Gastrocnemius medialis (tissue), 4 donors: ENCODE measurements at regions of chr12 and their contacts with region 1.

Region 1: GRCh38 chr12:91163116-91163515 is 19.5 kb downstream of the DCN start:
- DNase-seq: no peak
- ATAC-seq: no peak
- H3K4me3 ChIP-seq: no peak overlapping the region
- H3K27ac ChIP-seq: no peak overlapping the region
- H3K4me1 ChIP-seq: no peaks in the 10 kb centered on the region
- H3K27me3 ChIP-seq: no peaks in the 10 kb centered on the region
- CTCF ChIP-seq: no peak
- POLR2A ChIP-seq: no peak

Region 2: DNA sequence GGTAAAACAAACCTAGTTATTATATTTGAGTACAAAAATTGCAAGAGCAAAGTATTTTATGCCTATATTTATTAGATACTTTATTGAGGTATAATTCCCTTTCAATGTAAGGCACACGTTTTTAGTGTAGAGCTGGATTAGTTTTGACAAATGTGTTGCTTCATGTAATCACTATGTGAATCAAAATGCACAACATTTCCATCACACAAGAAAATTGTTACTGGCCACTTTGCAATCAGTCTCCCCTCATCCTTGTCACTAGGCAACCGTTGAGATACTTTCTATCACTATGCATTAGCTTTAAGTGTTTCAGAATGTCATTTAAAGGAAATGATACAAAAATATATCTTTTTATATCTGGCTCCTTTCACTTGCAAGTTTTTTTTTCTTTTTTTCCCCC is 739.2 kb before region 1 on chr12:
- in situ Hi-C with region 1: no loop called
- intact Hi-C with region 1: no loop called
- DNase-seq: no peak
- ATAC-seq: no peak
- H3K4me3 ChIP-seq: no peak overlapping the region
- H3K27ac ChIP-seq: no peak overlapping the region
- H3K4me1 ChIP-seq: no peaks in the 10 kb centered on the region
- H3K27me3 ChIP-seq: no peaks in the 10 kb centered on the region
- CTCF ChIP-seq: no peak
- POLR2A ChIP-seq: no peak

Region 3: DNA sequence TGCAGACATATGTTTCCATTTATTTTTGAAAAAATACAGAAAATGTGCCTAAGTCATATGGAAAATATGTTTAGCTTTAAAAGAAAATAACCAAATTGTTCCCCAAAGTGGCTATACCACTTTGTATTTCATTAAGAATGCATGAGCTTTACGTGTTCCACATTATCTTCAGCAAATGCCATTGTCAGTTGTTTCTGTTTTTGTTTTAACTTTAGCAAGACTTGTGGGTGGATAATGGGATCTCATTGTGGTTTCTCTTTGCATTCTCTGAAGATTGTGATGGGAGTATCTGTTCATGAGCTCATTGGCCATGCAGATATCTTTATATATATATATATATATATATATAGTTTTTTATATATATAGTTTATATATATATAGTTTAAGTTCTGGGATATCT is 389.6 kb before region 1 on chr12:
- in situ Hi-C with region 1: no loop called
- intact Hi-C with region 1: no loop called
- DNase-seq: no peak
- ATAC-seq: no peak
- H3K4me3 ChIP-seq: no peak overlapping the region
- H3K27ac ChIP-seq: no peak overlapping the region
- H3K4me1 ChIP-seq: no peaks in the 10 kb centered on the region
- H3K27me3 ChIP-seq: no peaks in the 10 kb centered on the region
- CTCF ChIP-seq: no peak
- POLR2A ChIP-seq: no peak

Region 4: GRCh38 chr12:91017511-91018263 is 145.4 kb before region 1 on chr12:
- in situ Hi-C with region 1: no loop called
- intact Hi-C with region 1: no loop called
- DNase-seq: no peak
- ATAC-seq: no peak
- H3K4me3 ChIP-seq: no peak overlapping the region
- H3K27ac ChIP-seq: peak overlapping the region; percentile 27 to 70 (median 54)
- H3K4me1 ChIP-seq: no peaks in the 10 kb centered on the region
- H3K27me3 ChIP-seq: no peaks in the 10 kb centered on the region
- CTCF ChIP-seq: no peak
- POLR2A ChIP-seq: no peak

Region 5: DNA sequence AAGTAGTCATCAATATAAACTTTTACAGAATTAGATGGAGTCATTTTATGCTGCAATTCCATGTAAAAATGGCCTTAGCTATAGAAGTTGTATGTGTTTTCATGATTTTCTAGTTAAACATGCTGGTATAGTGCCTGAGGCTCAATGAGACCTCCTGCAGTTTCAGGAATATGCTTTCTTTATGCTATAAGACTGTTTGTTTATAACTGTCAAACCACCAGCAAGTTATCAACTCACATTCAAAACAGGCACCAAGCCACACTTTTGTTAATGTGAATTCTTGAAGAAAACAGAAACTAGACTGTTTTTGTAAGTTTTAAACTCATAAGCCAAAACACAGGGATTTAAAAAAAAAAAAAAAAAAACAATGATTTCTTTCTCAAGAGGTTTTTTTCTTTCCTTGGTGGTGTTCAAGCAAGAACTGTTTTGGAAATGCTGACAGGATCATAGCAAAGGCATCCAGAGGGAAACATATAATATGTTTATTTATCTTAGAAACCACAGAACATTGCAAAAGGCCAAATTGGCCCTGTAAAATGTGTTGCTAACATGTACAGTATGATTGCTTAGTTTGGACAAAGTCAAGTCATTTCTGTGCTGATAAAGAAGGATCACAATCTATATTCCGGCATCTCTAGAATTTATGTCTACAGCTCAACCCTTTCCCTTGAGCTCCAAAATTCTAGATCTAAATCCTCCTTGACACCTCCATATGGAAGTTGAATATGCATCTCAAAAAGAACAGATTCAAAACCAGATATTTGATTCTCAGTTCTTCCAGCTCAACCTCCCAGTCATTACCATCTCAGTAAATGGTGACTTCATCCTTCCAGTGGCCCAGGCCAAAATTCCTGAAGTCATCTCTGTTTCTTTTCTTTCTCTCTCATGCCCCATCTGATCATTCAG is 22.8 kb before region 1 on chr12:
- in situ Hi-C with region 1: no loop called
- intact Hi-C with region 1: no loop called
- DNase-seq: peak in 1 of 2 donors; percentile 10
- ATAC-seq: peak; percentile 33 to 72
- H3K4me3 ChIP-seq: no peak overlapping the region
- H3K27ac ChIP-seq: peak overlapping the region in 1 of 4 donors; percentile 1
- H3K4me1 ChIP-seq: peaks cover 0 to 8% of the 10 kb centered on the region in 2 donors
- H3K27me3 ChIP-seq: no peaks in the 10 kb centered on the region
- CTCF ChIP-seq: no peak
- POLR2A ChIP-seq: no peak

Region 6: GRCh38 chr12:91189516-91189915 is 26.4 kb after region 1 on chr12:
- in situ Hi-C with region 1: no loop called
- intact Hi-C with region 1: loop called (anchors 1 kb)
- DNase-seq: no peak
- ATAC-seq: no peak
- H3K4me3 ChIP-seq: no peak overlapping the region
- H3K27ac ChIP-seq: no peak overlapping the region
- H3K4me1 ChIP-seq: no peaks in the 10 kb centered on the region
- H3K27me3 ChIP-seq: no peaks in the 10 kb centered on the region
- CTCF ChIP-seq: no peak
- POLR2A ChIP-seq: no peak